PC-9 (cell line): ENCODE measurements at regions of chr2 and their contacts with region 1.

Region 1: GRCh38 chr2:12176623-12177454 is 430.4 kb downstream of the LPIN1 start:
- DNase-seq: peak; percentile 78 to 95
- H3K4me3 ChIP-seq: no peak overlapping the region
- H3K27ac ChIP-seq: peak overlapping the region; percentile 50
- H3K4me1 ChIP-seq: peaks cover 30% of the 10 kb centered on the region
- H3K27me3 ChIP-seq: no peaks in the 10 kb centered on the region
- CTCF ChIP-seq: no peak

Region 2: DNA sequence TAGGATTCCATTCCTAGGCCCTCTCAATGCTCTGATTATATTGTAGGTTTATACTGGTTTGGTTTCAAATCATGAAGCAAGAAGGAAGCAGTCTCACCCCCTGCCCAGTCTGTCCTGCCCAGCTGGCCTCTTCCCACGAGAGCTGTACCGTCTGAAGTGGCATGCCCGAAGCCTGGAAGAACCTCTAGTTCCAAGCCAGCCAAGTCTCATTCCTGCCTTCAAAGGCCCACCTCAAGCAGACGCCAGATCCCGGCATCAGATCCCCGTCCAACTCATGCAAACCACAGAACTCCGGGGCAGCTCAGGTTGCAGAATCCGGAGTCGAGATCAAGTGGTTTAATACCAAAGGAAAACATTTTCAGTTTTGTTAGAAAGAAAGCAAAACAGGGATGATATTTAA is 196.0 kb before region 1 on chr2:
- CTCF ChIA-PET with region 1: no interaction called
- POLR2A ChIA-PET with region 1: no interaction called
- intact Hi-C with region 1: no loop called
- DNase-seq: no peak
- H3K4me3 ChIP-seq: no peak overlapping the region
- H3K27ac ChIP-seq: no peak overlapping the region
- H3K4me1 ChIP-seq: no peaks in the 10 kb centered on the region
- H3K27me3 ChIP-seq: no peaks in the 10 kb centered on the region
- CTCF ChIP-seq: no peak

Region 3: DNA sequence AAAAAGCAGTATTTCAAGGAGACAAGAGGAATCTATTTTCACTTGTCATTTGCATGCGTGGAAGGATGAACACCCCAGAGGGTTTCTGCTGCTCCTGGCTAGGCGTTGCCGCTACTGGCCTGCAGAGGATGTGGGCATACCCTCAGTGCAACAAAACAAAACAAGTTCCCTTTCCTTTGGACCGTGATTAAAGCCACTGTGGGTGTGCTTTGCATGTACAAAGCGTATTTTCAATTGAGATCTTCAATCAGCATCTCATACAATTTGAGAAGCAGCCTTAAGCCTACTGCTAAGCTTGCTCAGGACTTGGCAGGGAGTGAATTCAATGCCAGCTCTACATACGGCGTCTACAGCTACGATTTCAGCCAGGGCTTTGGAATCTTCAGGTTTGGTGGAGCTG is 132.0 kb before region 1 on chr2:
- CTCF ChIA-PET with region 1: no interaction called
- POLR2A ChIA-PET with region 1: no interaction called
- intact Hi-C with region 1: loop called (anchors 10 kb)
- DNase-seq: no peak
- H3K4me3 ChIP-seq: no peak overlapping the region
- H3K27ac ChIP-seq: no peak overlapping the region
- H3K4me1 ChIP-seq: peaks cover 19% of the 10 kb centered on the region
- H3K27me3 ChIP-seq: no peaks in the 10 kb centered on the region
- CTCF ChIP-seq: no peak

Region 4: GRCh38 chr2:12131975-12132374 is 44.9 kb before region 1 on chr2:
- CTCF ChIA-PET with region 1: no interaction called
- POLR2A ChIA-PET with region 1: no interaction called
- intact Hi-C with region 1: loop called (anchors 1 kb)
- DNase-seq: peak; percentile 30 to 82
- H3K4me3 ChIP-seq: no peak overlapping the region
- H3K27ac ChIP-seq: peak overlapping the region; percentile 68
- H3K4me1 ChIP-seq: peaks cover 21% of the 10 kb centered on the region
- H3K27me3 ChIP-seq: no peaks in the 10 kb centered on the region
- CTCF ChIP-seq: no peak